SK-N-SH (cell line): ENCODE measurements at regions of chr16 and their contacts with region 1.

Region 1: GRCh38 chr16:50665128-50665878 is 15.8 kb downstream of the SNX20 start:
- DNase-seq: peak; percentile 84
- H3K4me3 ChIP-seq: peak overlapping the region in 1 of 2 experiments; percentile 45; a peak in 2 of 4 replicates
- H3K27ac ChIP-seq: no peak overlapping the region
- H3K4me1 ChIP-seq: no peaks in the 10 kb centered on the region; a peak in 1 of 4 replicates
- H3K27me3 ChIP-seq: no peaks in the 10 kb centered on the region
- CTCF ChIP-seq: peak; percentile 79
- EP300 ChIP-seq: no peak
- RAD21 ChIP-seq: peak; percentile 94

Region 2: DNA sequence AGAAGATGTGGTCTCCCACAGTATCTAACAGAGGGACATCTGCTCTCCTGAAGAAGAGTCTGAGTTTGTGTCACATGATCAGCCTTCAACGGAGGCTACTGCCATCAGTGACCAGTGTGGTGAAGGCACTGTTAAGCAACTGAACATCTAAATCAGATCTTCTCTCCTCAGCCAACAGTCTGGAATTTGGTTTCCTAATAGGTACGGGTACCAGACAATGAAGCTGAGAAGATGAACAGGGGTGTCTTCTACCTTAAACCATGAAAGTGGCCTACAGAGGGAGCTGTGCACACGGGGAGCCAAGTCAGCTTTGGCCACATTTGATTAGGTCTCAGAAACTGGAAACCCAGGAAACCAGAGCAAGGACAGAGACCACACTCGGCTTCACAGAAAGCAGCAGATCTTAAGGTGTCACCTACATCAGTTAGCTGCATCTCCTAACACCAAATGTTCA is 338.3 kb before region 1 on chr16:
- CTCF ChIA-PET with region 1: interaction called, 10 read pairs
- POLR2A ChIA-PET with region 1: no interaction called
- DNase-seq: no peak
- H3K4me3 ChIP-seq: no peak overlapping the region; a peak in 1 of 4 replicates
- H3K27ac ChIP-seq: no peak overlapping the region; a peak in 1 of 4 replicates
- H3K4me1 ChIP-seq: peaks cover 0 to 3% of the 10 kb centered on the region in 2 experiments; a peak in 2 of 4 replicates
- H3K27me3 ChIP-seq: no peaks in the 10 kb centered on the region
- CTCF ChIP-seq: peak; percentile 50
- EP300 ChIP-seq: no peak
- RAD21 ChIP-seq: no peak; the same call in 1 of the 2 replicates

Region 3: DNA sequence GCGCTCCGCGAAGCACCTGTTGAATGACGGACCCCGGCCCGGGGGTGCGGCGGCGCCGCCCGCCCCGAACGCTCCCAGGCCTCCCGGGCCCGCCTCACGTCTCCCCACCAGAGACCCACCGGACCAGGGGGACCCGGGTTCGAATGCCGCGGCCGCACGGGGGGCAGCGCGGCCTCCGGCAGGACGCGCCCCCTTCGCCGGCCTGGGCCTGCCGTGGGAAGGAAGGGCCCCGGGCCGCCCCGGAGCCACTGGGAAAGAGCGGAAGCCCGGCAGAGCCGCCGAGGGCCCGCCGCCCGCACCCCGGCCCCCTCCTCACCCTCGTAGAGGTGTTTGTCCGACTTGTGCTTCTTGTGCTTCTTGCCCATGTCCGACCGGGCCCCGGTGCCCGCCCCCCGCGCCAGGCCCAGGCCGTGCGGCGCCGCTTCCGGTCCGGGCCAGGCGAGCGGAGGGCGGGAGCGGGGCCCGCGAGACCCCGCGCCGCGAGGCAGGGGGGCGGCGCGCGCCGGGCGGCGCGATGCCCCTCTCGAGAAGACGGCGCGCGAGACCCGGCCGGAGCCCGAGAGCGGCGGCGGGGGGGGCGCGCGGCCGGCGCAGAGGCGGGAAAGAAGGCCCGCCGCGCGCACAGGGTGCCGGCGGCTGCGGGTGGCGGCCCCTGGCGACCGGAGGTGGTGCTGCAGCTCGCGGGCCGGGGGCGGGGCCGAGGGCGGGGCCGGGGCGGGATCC is 296.7 kb before region 1 on chr16 and contains the start of gene BRD7:
- CTCF ChIA-PET with region 1: interaction called, 326 read pairs
- POLR2A ChIA-PET with region 1: interaction called, 4 read pairs
- DNase-seq: peak; percentile 97
- H3K4me3 ChIP-seq: peak within 1 kb of the TSS; percentile 79 to 91
- H3K27ac ChIP-seq: peak within 1 kb of the TSS; percentile 39 to 72; a peak in 3 of 4 replicates
- H3K4me1 ChIP-seq: peaks cover 0 to 28% of the 10 kb centered on the region in 2 experiments; a peak in 2 of 4 replicates
- H3K27me3 ChIP-seq: no peaks in the 10 kb centered on the region
- CTCF ChIP-seq: no peak
- EP300 ChIP-seq: no peak
- RAD21 ChIP-seq: no peak
- polyA plus RNA-seq, gene BRD7: 31.6 and 32.9 TPM in 2 replicates

Region 4: DNA sequence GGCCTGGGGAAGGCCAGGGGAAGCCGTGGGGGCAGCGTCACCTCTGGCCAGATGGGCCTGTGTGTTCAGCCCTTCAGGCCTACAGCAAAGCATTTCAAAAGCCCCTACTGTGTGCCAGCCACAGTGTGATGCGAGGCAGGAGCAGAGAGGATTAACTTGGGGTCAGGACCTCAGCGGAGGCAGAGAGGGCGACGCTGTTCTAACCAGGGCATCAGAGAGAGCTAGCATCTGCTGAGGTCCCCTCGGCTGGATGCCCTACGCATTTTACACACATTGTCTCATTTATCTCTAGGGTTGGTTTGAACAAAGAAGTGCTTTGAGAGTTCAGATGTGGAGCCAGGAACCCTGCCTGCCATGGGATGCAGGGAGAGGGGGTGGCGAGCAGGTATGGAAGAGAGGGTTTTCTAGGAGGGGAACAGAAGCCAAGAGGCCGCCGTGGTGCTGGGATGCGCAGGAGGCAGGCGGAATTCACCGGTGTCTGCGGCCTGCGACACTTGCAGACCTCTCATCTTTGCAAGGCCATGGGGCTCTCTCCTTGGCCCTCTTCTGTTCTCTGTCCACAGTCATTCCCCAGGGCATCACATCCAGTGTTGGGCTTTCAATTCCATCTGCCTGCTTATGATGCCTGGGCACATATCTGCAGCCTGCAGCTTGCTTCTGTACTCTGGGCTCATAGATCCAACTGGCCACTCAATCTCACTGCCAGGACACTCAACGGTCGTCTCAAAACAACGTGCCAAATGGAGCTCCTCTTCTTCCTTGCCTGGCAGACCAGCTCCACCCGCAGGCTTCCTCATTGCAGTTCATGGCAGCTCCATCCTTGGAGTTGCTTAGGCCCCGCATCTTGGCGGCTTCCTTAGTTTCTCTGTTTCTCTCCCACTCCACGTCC is 125.2 kb before region 1 on chr16:
- CTCF ChIA-PET with region 1: interaction called, 12 read pairs
- POLR2A ChIA-PET with region 1: no interaction called
- DNase-seq: no peak
- H3K4me3 ChIP-seq: no peak overlapping the region
- H3K27ac ChIP-seq: no peak overlapping the region
- H3K4me1 ChIP-seq: peaks cover 0 to 10% of the 10 kb centered on the region in 2 experiments; a peak in 1 of 4 replicates
- H3K27me3 ChIP-seq: peaks cover 7% of the 10 kb centered on the region; the same call in 1 of the 2 replicates
- CTCF ChIP-seq: no peak
- EP300 ChIP-seq: no peak
- RAD21 ChIP-seq: peak; percentile 44

Region 5: DNA sequence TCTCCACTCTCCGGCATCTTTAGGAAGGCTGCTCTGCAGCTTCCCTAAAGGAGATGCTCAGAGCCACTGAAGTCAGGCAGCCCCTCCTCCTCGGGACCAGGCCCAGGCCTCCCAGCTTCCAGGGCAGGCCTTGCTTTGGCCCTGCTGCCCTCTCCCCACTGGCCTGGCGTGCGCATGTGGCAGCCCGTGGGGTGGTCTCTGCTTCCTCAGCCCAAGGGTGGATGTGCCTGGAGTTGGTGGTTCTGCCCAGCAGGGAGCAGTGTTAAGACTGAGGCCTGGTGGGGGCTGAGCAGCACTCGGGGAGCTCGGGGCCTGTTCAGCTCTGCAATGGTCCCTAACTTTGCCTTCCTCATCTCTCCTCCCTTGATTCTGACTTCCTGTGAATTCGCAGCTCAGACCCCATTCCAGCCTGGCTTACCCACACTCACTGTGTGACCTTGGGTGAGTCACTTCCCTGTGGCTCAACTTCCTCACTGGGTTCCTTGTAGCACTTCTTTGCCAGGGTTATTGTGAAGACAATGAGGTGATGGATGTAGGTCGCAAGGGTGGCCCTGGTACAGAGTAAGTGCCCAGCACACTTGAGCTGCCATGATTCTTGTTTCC is 53.9 kb before region 1 on chr16:
- CTCF ChIA-PET with region 1: interaction called, 14 read pairs
- POLR2A ChIA-PET with region 1: no interaction called
- DNase-seq: no peak
- H3K4me3 ChIP-seq: no peak overlapping the region
- H3K27ac ChIP-seq: no peak overlapping the region
- H3K4me1 ChIP-seq: peaks cover 0 to 15% of the 10 kb centered on the region in 2 experiments; a peak in 2 of 4 replicates
- H3K27me3 ChIP-seq: no peaks in the 10 kb centered on the region
- CTCF ChIP-seq: no peak
- EP300 ChIP-seq: no peak
- RAD21 ChIP-seq: no peak

Region 6: DNA sequence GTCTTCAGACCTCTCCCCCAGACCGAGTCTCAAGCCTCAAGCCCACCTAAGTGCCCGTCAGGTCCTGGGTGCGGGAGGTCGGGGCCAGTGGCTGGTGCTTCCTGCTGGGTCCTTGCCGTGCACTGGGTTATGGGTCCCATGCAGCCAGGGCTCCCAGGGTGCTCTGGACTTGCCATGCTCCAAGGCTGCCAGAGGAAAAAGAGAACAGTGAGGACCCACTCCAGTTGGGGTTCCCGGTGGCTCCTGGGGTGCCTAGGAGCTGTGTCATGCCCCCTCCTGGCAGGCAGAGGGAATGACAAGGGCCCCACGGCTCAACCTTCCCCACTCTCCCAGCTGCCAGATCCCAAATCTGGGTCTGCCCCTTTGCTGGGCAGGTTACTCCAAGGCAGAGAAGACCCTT is 12.0 kb after region 1 on chr16:
- CTCF ChIA-PET with region 1: interaction called, 77 read pairs
- POLR2A ChIA-PET with region 1: no interaction called
- DNase-seq: peak; percentile 48
- H3K4me3 ChIP-seq: no peak overlapping the region
- H3K27ac ChIP-seq: no peak overlapping the region
- H3K4me1 ChIP-seq: peaks cover 0 to 3% of the 10 kb centered on the region in 2 experiments; a peak in 1 of 4 replicates
- H3K27me3 ChIP-seq: no peaks in the 10 kb centered on the region
- CTCF ChIP-seq: peak; percentile 34; the same call in 1 of the 2 replicates
- EP300 ChIP-seq: no peak
- RAD21 ChIP-seq: no peak